Colonic mucosa (tissue), 4 donors: ENCODE measurements at regions of chr12 and their contacts with region 1.

Region 1: GRCh38 chr12:131340616-131341210 is 370.2 kb upstream of the SFSWAP start:
- DNase-seq: no peak
- H3K4me3 ChIP-seq: no peak overlapping the region
- H3K27ac ChIP-seq: no peak overlapping the region
- H3K4me1 ChIP-seq: no peaks in the 10 kb centered on the region
- H3K27me3 ChIP-seq: no peaks in the 10 kb centered on the region
- CTCF ChIP-seq: no peak

Region 2: DNA sequence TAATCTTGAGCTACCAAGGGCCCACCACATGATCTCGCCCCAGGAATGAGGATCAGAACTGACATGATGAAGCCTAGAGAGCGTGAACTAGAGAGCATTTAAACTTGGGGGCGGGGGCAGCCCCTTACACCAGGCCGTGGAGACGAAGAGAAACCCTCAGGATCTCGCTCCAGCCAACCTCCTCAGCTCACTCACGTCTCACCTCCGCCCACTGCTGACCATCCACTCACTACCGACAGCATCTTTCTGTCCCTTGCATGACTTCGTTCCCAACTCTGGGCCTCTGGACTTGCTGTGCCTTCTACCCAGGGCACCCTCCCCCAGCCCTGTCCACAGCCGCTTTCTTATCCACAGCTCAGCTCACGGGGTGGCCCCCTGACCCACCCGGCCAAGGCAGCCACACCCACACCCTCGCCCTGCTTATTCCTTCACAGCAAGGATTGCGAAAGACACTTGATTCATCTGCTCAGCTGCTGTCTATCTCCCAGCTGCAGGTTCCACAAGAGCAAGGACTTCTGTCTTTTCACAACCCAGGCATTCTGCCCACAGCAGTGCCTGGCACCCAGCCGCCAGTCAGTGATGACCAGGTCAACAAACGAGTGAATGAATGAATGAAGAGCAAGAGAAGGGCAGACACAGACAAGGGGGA is 508.0 kb before region 1 on chr12:
- intact Hi-C with region 1: no loop called
- DNase-seq: peak; percentile 22
- H3K4me3 ChIP-seq: no peak overlapping the region
- H3K27ac ChIP-seq: no peak overlapping the region
- H3K4me1 ChIP-seq: no peaks in the 10 kb centered on the region
- H3K27me3 ChIP-seq: no peaks in the 10 kb centered on the region
- CTCF ChIP-seq: no peak

Region 3: DNA sequence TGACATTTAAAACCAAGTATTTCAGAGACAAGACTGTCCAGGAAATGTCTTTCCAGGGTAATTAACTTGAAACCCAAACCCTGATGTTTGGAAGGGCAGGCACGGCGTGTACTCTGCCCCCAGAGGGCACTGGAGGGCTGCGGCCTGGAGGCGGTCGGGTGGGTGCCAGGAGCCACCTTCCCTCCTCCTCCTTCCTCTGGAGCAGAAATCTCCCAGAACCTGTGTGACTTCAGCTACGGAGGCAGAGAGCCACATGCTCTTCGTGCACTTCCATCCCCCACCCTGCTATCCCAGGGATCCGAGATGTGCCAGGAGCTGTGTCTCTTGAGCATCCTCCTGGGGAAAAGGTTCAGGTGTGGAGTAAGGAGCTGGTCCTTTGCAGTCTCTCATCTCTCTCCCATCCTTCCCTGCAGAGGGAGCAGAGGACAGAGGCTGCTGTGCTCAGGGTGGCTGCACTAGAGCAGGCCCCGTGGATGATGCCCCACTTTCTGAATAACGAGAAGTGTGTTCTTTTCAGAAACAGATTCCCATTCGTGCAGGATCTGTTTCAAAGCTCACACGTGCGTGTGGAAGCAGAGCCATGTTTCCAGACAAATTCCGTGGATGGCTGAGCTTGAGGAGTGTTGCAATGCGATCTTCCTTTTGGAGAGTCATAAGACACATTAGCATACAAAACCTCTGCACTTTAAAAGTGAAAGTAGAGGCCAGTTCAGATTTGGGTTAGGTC is 224.2 kb before region 1 on chr12:
- intact Hi-C with region 1: no loop called
- DNase-seq: no peak
- H3K4me3 ChIP-seq: no peak overlapping the region
- H3K27ac ChIP-seq: no peak overlapping the region
- H3K4me1 ChIP-seq: no peaks in the 10 kb centered on the region
- H3K27me3 ChIP-seq: no peaks in the 10 kb centered on the region
- CTCF ChIP-seq: no peak

Region 4: GRCh38 chr12:131242741-131243496 is 97.8 kb before region 1 on chr12:
- intact Hi-C with region 1: no loop called
- DNase-seq: no peak
- H3K4me3 ChIP-seq: no peak overlapping the region
- H3K27ac ChIP-seq: no peak overlapping the region
- H3K4me1 ChIP-seq: no peaks in the 10 kb centered on the region
- H3K27me3 ChIP-seq: no peaks in the 10 kb centered on the region
- CTCF ChIP-seq: no peak

Region 5: GRCh38 chr12:131621701-131622421 is 281.1 kb after region 1 on chr12:
- intact Hi-C with region 1: loop called (anchors 5 kb)
- DNase-seq: no peak
- H3K4me3 ChIP-seq: no peak overlapping the region
- H3K27ac ChIP-seq: no peak overlapping the region
- H3K4me1 ChIP-seq: no peaks in the 10 kb centered on the region
- H3K27me3 ChIP-seq: no peaks in the 10 kb centered on the region
- CTCF ChIP-seq: no peak

Region 6: GRCh38 chr12:131773582-131774221 is 433.0 kb after region 1 on chr12:
- intact Hi-C with region 1: no loop called
- DNase-seq: no peak
- H3K4me3 ChIP-seq: no peak overlapping the region
- H3K27ac ChIP-seq: no peak overlapping the region
- H3K4me1 ChIP-seq: no peaks in the 10 kb centered on the region
- H3K27me3 ChIP-seq: no peaks in the 10 kb centered on the region
- CTCF ChIP-seq: no peak